ENCODE measurements at regions of chr9 and their contacts with region 1.

Region 1: DNA sequence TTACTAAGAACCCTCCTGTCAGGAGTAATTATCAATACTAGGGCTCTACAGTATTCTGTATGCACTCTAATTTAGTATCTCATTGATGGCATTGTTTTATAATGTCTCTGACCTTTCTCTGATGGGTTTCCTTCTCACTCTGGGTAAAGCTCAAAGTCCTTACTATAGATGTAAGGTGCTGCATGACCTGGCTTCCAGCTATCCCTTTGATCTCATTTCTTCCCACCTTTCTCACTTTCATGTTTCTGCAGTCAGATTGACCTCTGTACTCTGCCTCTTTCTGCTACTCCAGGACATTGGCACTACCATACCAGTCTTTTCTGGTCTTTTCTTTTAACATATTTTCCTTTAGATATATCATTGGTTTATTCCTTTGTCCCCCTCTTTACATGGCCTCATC is 2332.8 kb upstream of the C9orf72 start:
- DNase-seq: no peak
- H3K4me3 ChIP-seq: no peak overlapping the region
- H3K27ac ChIP-seq: no peak overlapping the region
- H3K4me1 ChIP-seq: no peaks in the 10 kb centered on the region
- H3K27me3 ChIP-seq: no peaks in the 10 kb centered on the region
- CTCF ChIP-seq: no peak
- EP300 ChIP-seq: no peak
- POLR2A ChIP-seq: no peak

Region 2: GRCh38 chr9:29160763-29161353 is 745.2 kb before region 1 on chr9:
- intact Hi-C with region 1: loop called in 1 of 4 experiments (anchors 10 kb)
- DNase-seq: no peak
- H3K4me3 ChIP-seq: no peak overlapping the region
- H3K27ac ChIP-seq: no peak overlapping the region
- H3K4me1 ChIP-seq: no peaks in the 10 kb centered on the region
- H3K27me3 ChIP-seq: no peaks in the 10 kb centered on the region
- CTCF ChIP-seq: no peak
- EP300 ChIP-seq: no peak
- POLR2A ChIP-seq: no peak

Measured in ovary (tissue), 10 donors.